Motor neuron (in vitro differentiated cells): ENCODE measurements at regions of chr12 and their contacts with region 1.

Region 1: DNA sequence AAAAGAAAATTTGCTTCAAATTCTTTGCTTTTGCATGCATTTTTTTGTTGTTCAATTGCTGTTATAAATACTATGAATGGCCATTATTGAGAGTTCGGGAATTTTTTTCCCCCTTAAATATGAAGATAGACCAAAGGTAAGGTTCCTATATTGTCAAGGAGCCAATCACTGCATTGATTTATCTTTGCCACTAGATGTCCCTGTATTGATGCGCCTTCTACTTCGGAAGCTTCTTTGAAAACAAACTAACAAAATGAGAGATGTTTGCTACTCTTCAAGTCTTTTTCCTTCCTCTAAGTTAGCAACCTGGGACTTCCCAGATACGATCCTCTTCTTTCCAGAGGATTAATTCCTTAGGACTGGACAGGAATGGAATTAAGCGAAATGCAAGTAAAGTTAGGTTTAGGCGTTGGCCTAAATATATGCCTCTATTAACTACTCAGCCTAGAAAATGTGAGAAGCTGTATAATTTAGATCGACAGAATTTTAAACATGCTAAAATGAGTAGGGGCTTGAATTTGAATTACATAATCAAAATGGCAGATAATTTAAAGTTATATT is 318.1 kb downstream of the AEBP2 start:
- ATAC-seq: peak in 4 of 8 experiments; percentile 31 to 45 (median 38)
- H3K4me3 ChIP-seq: no peak overlapping the region
- H3K27ac ChIP-seq: no peak overlapping the region
- H3K4me1 ChIP-seq: no peaks in the 10 kb centered on the region

Region 2: DNA sequence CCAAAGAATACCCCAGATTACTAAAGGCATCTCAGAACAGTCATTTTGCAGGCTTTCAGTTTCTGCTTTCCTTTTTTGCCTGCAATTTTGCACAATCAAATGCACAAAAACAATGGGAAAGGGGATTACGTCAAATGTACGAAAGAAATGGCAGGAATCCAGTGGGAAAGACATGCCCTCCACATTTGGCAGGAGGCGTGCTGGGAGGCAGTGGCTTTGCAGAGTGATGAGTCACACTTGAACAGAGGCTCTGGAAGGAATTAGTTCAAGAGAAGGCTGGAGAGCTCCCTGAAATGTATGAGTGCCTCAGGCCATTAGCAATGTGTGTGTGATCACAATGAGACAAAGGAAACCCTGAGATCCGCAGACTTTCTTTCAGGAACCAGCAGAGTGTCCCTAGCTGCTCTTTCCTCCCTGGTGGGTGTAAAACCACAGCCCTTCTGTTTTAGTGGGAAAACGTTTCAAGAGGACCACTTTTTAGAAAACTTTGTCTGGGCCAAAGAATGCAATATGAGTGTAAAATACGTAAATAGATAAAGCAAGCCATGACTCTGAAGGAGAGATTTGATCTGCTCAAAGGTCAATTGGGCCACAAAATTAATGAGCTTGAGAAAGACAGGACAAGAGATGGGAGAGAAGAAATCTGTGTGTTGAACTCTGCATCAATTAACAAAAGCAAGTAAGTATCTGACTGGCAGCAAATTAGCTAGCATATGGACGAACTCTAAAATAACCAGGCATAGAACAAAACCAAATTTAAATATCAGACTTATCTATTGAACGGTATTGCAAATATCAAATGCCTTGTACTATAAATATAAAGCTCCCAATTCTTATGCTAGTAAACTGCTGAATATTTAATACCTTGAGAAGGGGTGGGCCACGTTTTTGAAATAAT is 455.5 kb after region 1 on chr12:
- in situ Hi-C with region 1: loop called in 2 of 9 experiments (anchors 25 kb)
- ATAC-seq: peak; percentile 99 to 100 (median 99)
- H3K4me3 ChIP-seq: peak overlapping the region in 1 of 5 donors; percentile 1
- H3K27ac ChIP-seq: peak overlapping the region; percentile 61 to 64
- H3K4me1 ChIP-seq: peaks cover 12 to 20% of the 10 kb centered on the region in 2 donors

Region 3: GRCh38 chr12:20601668-20602280 is 844.4 kb after region 1 on chr12:
- in situ Hi-C with region 1: loop called in 4 of 9 experiments (anchors 25 kb)
- ATAC-seq: peak in 3 of 8 experiments; percentile 18 to 47 (median 29)
- H3K4me3 ChIP-seq: no peak overlapping the region
- H3K27ac ChIP-seq: no peak overlapping the region
- H3K4me1 ChIP-seq: no peaks in the 10 kb centered on the region